ENCODE measurements at regions of chr2 and their contacts with region 1.

Region 1: GRCh38 chr2:74816540-74817303 is 17.2 kb upstream of the HK2 start:
- DNase-seq: peak; percentile 57
- H3K4me3 ChIP-seq: no peak overlapping the region; the same call in 1 of the 2 replicates
- H3K4me3 Mint-ChIP-seq: peak overlapping the region; percentile 52
- H3K27ac Mint-ChIP-seq: peak overlapping the region; percentile 37
- H3K4me1 ChIP-seq: peaks cover 55% of the 10 kb centered on the region
- H3K4me1 Mint-ChIP-seq: peaks cover 40% of the 10 kb centered on the region
- H3K27me3 ChIP-seq: no peaks in the 10 kb centered on the region
- H3K27me3 Mint-ChIP-seq: no peaks in the 10 kb centered on the region
- CTCF ChIP-seq: no peak

Region 2: GRCh38 chr2:74715078-74715791 is 101.5 kb before region 1 on chr2:
- CTCF ChIA-PET with region 1: interaction called, 3 read pairs
- POLR2A ChIA-PET with region 1: no interaction called
- intact Hi-C with region 1: loop called (anchors 1 kb)
- DNase-seq: peak; percentile 80 to 90
- H3K4me3 ChIP-seq: peak overlapping the region; percentile 62
- H3K4me3 Mint-ChIP-seq: peak overlapping the region; percentile 86
- H3K27ac Mint-ChIP-seq: no peak overlapping the region
- H3K4me1 ChIP-seq: no peaks in the 10 kb centered on the region
- H3K4me1 Mint-ChIP-seq: no peaks in the 10 kb centered on the region
- H3K27me3 ChIP-seq: no peaks in the 10 kb centered on the region; the same call in 1 of the 2 replicates
- H3K27me3 Mint-ChIP-seq: peaks cover 5% of the 10 kb centered on the region
- CTCF ChIP-seq: peak; percentile 88 to 95

Region 3: GRCh38 chr2:74764429-74765272 is 52.1 kb before region 1 on chr2:
- CTCF ChIA-PET with region 1: no interaction called
- POLR2A ChIA-PET with region 1: no interaction called
- intact Hi-C with region 1: loop called (anchors 1 kb)
- DNase-seq: peak; percentile 51 to 79
- H3K4me3 ChIP-seq: no peak overlapping the region
- H3K4me3 Mint-ChIP-seq: no peak overlapping the region
- H3K27ac Mint-ChIP-seq: no peak overlapping the region
- H3K4me1 ChIP-seq: peaks cover 30% of the 10 kb centered on the region
- H3K4me1 Mint-ChIP-seq: peaks cover 41% of the 10 kb centered on the region
- H3K27me3 ChIP-seq: no peaks in the 10 kb centered on the region
- H3K27me3 Mint-ChIP-seq: no peaks in the 10 kb centered on the region
- CTCF ChIP-seq: no peak

Region 4: DNA sequence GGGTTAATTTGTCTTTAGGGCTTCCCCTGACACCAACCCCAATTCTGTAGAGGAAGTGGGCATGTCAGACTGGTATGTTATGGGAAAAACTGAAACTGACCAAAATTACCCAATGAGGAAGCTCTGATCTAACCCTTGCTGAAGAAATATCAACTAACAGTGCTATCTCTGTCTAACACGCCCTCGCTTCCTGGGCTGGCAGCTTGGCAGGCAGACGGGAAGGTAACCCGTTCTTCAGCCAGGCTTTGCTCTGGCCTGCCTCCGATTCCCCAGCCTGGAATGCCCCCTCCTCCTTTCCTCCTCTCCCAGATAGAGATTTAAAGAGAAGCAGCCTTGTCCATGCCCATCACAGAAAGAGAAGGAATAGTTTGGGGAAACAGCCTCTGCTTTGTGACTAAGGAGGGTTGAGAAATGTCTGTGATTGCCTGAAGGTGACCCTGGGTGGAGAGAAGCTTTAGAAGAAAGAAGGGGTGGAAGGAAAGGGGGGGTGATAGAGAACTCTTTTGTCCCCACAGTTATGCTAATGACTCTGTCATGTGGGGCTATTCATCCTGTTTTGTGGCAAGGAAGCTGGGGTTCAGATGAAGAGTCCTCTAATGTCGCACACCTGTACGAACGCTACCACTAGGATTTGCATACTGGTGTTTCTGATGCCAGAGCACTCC is 32.6 kb after region 1 on chr2:
- CTCF ChIA-PET with region 1: no interaction called
- POLR2A ChIA-PET with region 1: no interaction called
- intact Hi-C with region 1: loop called (anchors 2 kb)
- DNase-seq: no peak
- H3K4me3 ChIP-seq: no peak overlapping the region
- H3K4me3 Mint-ChIP-seq: no peak overlapping the region
- H3K27ac Mint-ChIP-seq: no peak overlapping the region
- H3K4me1 ChIP-seq: peaks cover 56% of the 10 kb centered on the region
- H3K4me1 Mint-ChIP-seq: peaks cover 50% of the 10 kb centered on the region
- H3K27me3 ChIP-seq: no peaks in the 10 kb centered on the region
- H3K27me3 Mint-ChIP-seq: no peaks in the 10 kb centered on the region
- CTCF ChIP-seq: no peak

Region 5: GRCh38 chr2:74944987-74945787 is 128.5 kb after region 1 on chr2:
- CTCF ChIA-PET with region 1: no interaction called
- POLR2A ChIA-PET with region 1: no interaction called
- intact Hi-C with region 1: loop called (anchors 5 kb)
- DNase-seq: no peak
- H3K4me3 ChIP-seq: no peak overlapping the region
- H3K4me3 Mint-ChIP-seq: no peak overlapping the region
- H3K27ac Mint-ChIP-seq: no peak overlapping the region
- H3K4me1 ChIP-seq: peaks cover 52% of the 10 kb centered on the region
- H3K4me1 Mint-ChIP-seq: peaks cover 18% of the 10 kb centered on the region
- H3K27me3 ChIP-seq: no peaks in the 10 kb centered on the region
- H3K27me3 Mint-ChIP-seq: no peaks in the 10 kb centered on the region
- CTCF ChIP-seq: no peak